ENCODE measurements at regions of chr17 and their contacts with region 1.

Region 1: DNA sequence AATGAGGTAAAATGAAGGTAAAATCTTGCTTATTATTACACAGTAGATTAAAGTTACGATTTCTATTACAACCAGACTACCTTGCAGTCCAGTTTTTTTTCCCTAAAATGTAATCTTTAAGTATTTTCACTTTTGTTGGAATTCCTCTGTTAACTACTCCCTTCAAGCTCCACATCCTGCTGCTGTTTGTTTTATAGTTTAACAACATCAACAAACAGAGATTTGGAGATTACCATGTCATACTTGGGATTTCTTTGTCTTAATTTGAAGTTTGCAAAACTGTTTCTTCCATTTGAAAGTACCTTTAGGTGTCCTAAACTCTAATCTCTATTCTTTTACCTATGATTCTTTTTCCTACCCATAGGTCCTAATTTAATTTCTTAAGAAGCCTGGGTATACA is 83.3 kb downstream of the ABHD15 start:
- DNase-seq: no peak
- ATAC-seq: no peak
- H3K4me3 ChIP-seq: no peak overlapping the region
- H3K4me3 Mint-ChIP-seq: no peak overlapping the region
- H3K27ac ChIP-seq: no peak overlapping the region
- H3K27ac Mint-ChIP-seq: peak overlapping the region in 1 of 9 donors; percentile 28
- H3K4me1 ChIP-seq: no peaks in the 10 kb centered on the region
- H3K4me1 Mint-ChIP-seq: no peaks in the 10 kb centered on the region
- H3K27me3 ChIP-seq: no peaks in the 10 kb centered on the region
- H3K27me3 Mint-ChIP-seq: no peaks in the 10 kb centered on the region

Region 2: GRCh38 chr17:28112220-28113005 is 1371.1 kb before region 1 on chr17:
- CTCF ChIA-PET with region 1: no interaction called
- POLR2A ChIA-PET with region 1: no interaction called
- intact Hi-C with region 1: no loop called
- DNase-seq: no peak
- ATAC-seq: no peak
- H3K4me3 ChIP-seq: no peak overlapping the region
- H3K4me3 Mint-ChIP-seq: no peak overlapping the region
- H3K27ac ChIP-seq: no peak overlapping the region
- H3K27ac Mint-ChIP-seq: no peak overlapping the region
- H3K4me1 ChIP-seq: peaks cover 0 to 8% of the 10 kb centered on the region in 2 donors
- H3K4me1 Mint-ChIP-seq: peaks cover 12 to 40% (median 24%) of the 10 kb centered on the region in 7 donors
- H3K27me3 ChIP-seq: no peaks in the 10 kb centered on the region
- H3K27me3 Mint-ChIP-seq: no peaks in the 10 kb centered on the region

Region 3: DNA sequence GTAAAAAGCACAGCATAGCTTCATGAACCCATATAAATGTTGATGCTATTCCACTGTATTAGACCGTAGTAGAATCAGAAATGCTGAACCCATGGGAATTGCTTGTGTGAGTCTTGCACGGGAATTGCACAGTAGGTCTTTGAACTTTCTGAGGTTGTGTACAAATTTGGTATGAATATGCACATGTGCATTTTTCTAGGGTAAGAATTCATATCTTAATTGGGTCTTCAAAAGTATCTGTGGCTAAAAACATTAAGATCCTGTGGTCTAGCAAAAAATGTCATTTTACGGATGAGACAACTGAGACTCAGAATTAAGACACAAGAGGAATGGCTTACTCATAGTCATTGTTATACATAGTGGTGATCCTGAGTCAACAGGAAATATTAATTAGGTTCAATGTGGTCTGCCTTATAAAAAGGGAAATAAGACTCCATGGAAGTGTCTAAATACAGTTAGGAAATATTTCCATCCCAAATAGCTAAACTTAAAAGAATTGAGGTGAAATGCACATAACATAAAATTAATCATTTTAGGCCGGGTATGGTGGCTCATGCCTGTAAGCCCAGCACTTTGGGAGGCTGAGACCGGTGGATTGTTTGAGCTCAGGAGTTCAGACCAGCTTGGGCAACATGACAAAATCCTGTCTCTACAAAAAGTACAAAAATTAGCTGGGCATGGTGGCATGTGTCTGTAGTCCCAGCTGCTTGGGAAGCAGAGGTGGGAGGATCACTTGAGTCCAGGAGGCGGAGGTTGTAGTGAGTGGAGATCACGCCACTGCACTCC is 70.5 kb before region 1 on chr17:
- CTCF ChIA-PET with region 1: no interaction called
- POLR2A ChIA-PET with region 1: no interaction called
- intact Hi-C with region 1: no loop called
- DNase-seq: no peak
- ATAC-seq: no peak
- H3K4me3 ChIP-seq: no peak overlapping the region
- H3K4me3 Mint-ChIP-seq: no peak overlapping the region
- H3K27ac ChIP-seq: no peak overlapping the region
- H3K27ac Mint-ChIP-seq: peak overlapping the region in 4 of 9 donors; percentile 3 to 56 (median 22)
- H3K4me1 ChIP-seq: no peaks in the 10 kb centered on the region
- H3K4me1 Mint-ChIP-seq: peaks cover 15 to 48% (median 39%) of the 10 kb centered on the region in 7 donors
- H3K27me3 ChIP-seq: no peaks in the 10 kb centered on the region
- H3K27me3 Mint-ChIP-seq: no peaks in the 10 kb centered on the region

Region 4: GRCh38 chr17:29504711-29505110 is 21.2 kb after region 1 on chr17:
- CTCF ChIA-PET with region 1: no interaction called
- POLR2A ChIA-PET with region 1: no interaction called
- intact Hi-C with region 1: no loop called
- DNase-seq: no peak
- ATAC-seq: no peak
- H3K4me3 ChIP-seq: no peak overlapping the region
- H3K4me3 Mint-ChIP-seq: no peak overlapping the region
- H3K27ac ChIP-seq: no peak overlapping the region
- H3K27ac Mint-ChIP-seq: no peak overlapping the region
- H3K4me1 ChIP-seq: no peaks in the 10 kb centered on the region
- H3K4me1 Mint-ChIP-seq: peaks cover 0 to 3% (median 0%) of the 10 kb centered on the region in 7 donors
- H3K27me3 ChIP-seq: no peaks in the 10 kb centered on the region
- H3K27me3 Mint-ChIP-seq: no peaks in the 10 kb centered on the region

Region 5: GRCh38 chr17:29533976-29534375 is 50.5 kb after region 1 on chr17:
- CTCF ChIA-PET with region 1: no interaction called
- POLR2A ChIA-PET with region 1: no interaction called
- intact Hi-C with region 1: loop called in 1 of 2 experiments (anchors 10 kb)
- DNase-seq: no peak
- ATAC-seq: no peak
- H3K4me3 ChIP-seq: no peak overlapping the region
- H3K4me3 Mint-ChIP-seq: no peak overlapping the region
- H3K27ac ChIP-seq: no peak overlapping the region
- H3K27ac Mint-ChIP-seq: peak overlapping the region in 2 of 9 donors; percentile 14 to 36
- H3K4me1 ChIP-seq: no peaks in the 10 kb centered on the region
- H3K4me1 Mint-ChIP-seq: no peaks in the 10 kb centered on the region
- H3K27me3 ChIP-seq: no peaks in the 10 kb centered on the region
- H3K27me3 Mint-ChIP-seq: no peaks in the 10 kb centered on the region